Psoas muscle (tissue), 8 donors: ENCODE measurements at regions of chr6 and their contacts with region 1.

Region 1: GRCh38 chr6:3456755-3457466 is at the start of gene SLC22A23:
- DNase-seq: peak; percentile 76 to 88
- ATAC-seq: peak; percentile 90 to 92 (median 90)
- H3K4me3 ChIP-seq: peak within 1 kb of the TSS; percentile 78
- H3K27ac ChIP-seq: peak within 1 kb of the TSS; percentile 80
- H3K4me1 ChIP-seq: peaks cover 7% of the 10 kb centered on the region
- H3K27me3 ChIP-seq: no peaks in the 10 kb centered on the region
- CTCF ChIP-seq: peak; percentile 74
- total RNA-seq, gene SLC22A23: 8.7 to 13.7 (median 13.2) TPM

Region 2: GRCh38 chr6:3356056-3356761 is 100.7 kb before region 1 on chr6:
- intact Hi-C with region 1: loop called in 1 of 2 experiments (anchors 10 kb)
- DNase-seq: peak; percentile 73 to 83
- ATAC-seq: peak; percentile 56 to 81 (median 74)
- H3K4me3 ChIP-seq: peak overlapping the region; percentile 56
- H3K27ac ChIP-seq: peak overlapping the region; percentile 75
- H3K4me1 ChIP-seq: peaks cover 21% of the 10 kb centered on the region
- H3K27me3 ChIP-seq: no peaks in the 10 kb centered on the region
- CTCF ChIP-seq: no peak

Region 3: DNA sequence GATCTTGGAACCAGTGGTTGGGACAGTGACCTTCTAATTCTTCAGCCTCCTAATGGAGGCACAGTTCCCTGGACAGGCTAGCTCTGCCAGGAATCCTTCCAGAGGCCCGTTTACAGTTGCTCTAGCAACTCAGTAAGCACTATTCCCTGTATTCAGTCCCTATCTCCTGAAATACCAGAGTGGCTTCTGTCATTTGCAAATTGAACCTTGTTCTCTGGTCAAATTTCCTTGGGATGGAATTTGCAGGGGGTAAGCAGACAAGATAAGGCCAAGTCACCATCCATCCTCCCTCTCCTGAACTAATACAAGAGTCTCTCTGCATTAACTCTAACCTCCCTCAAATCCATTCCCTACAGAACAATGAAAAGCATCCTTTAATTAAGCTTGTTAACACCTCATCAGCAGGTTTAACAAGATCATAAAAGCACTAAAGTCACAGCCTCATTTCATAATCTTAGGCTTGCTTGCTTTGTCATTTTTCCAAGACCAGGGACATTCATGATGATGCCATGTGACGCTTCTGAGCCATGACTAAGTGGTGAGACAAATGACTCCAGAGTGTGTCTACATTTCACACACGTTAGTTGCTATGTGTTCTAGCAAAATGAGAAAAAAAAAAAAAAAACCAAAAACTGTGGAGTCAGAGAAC is 37.2 kb before region 1 on chr6:
- intact Hi-C with region 1: loop called in 1 of 2 experiments (anchors 5 kb)
- DNase-seq: no peak
- ATAC-seq: peak; percentile 74 to 92 (median 88)
- H3K4me3 ChIP-seq: no peak overlapping the region
- H3K27ac ChIP-seq: peak overlapping the region; percentile 68
- H3K4me1 ChIP-seq: peaks cover 46% of the 10 kb centered on the region
- H3K27me3 ChIP-seq: no peaks in the 10 kb centered on the region
- CTCF ChIP-seq: no peak